Activated CD4-positive, alpha-beta T cell treated with anti-CD3 and anti-CD28 coated beads for 36 hours (primary cell): ENCODE measurements at regions of chr11 and their contacts with region 1.

Region 1: GRCh38 chr11:82978422-82979099 is 77.0 kb downstream of the DDIAS start:
- DNase-seq: no peak
- ATAC-seq: peak; percentile 69
- H3K4me3 Mint-ChIP-seq: no peak overlapping the region
- H3K27ac Mint-ChIP-seq: peak overlapping the region; percentile 32
- H3K4me1 Mint-ChIP-seq: peaks cover 40% of the 10 kb centered on the region
- H3K27me3 Mint-ChIP-seq: no peaks in the 10 kb centered on the region

Region 2: GRCh38 chr11:82900277-82901164 is 78.0 kb before region 1 on chr11 and contains the start of gene PRCP:
- CTCF ChIA-PET with region 1: no interaction called
- POLR2A ChIA-PET with region 1: no interaction called
- intact Hi-C with region 1: loop called (anchors 1 to 5 kb)
- DNase-seq: peak; percentile 97
- ATAC-seq: peak; percentile 85
- H3K4me3 Mint-ChIP-seq: peak within 1 kb of the TSS; percentile 91
- H3K27ac Mint-ChIP-seq: peak within 1 kb of the TSS; percentile 100
- H3K4me1 Mint-ChIP-seq: peaks cover 44% of the 10 kb centered on the region
- H3K27me3 Mint-ChIP-seq: no peaks in the 10 kb centered on the region
- total RNA-seq, gene PRCP: 18.2 to 23.4 TPM

Region 3: GRCh38 chr11:82996966-82997606 is 18.5 kb after region 1 on chr11:
- CTCF ChIA-PET with region 1: interaction called, 10 read pairs
- POLR2A ChIA-PET with region 1: no interaction called
- intact Hi-C with region 1: loop called (anchors 1 kb)
- DNase-seq: peak; percentile 59
- ATAC-seq: peak; percentile 51
- H3K4me3 Mint-ChIP-seq: no peak overlapping the region
- H3K27ac Mint-ChIP-seq: no peak overlapping the region
- H3K4me1 Mint-ChIP-seq: peaks cover 65% of the 10 kb centered on the region
- H3K27me3 Mint-ChIP-seq: no peaks in the 10 kb centered on the region

Region 4: GRCh38 chr11:83063073-83063754 is 84.7 kb after region 1 on chr11:
- CTCF ChIA-PET with region 1: interaction called, 4 read pairs
- POLR2A ChIA-PET with region 1: no interaction called
- intact Hi-C with region 1: loop called in 1 of 2 experiments (anchors 2 kb)
- DNase-seq: no peak
- ATAC-seq: peak; percentile 84
- H3K4me3 Mint-ChIP-seq: peak overlapping the region; percentile 62
- H3K27ac Mint-ChIP-seq: peak overlapping the region; percentile 99
- H3K4me1 Mint-ChIP-seq: peaks cover 64% of the 10 kb centered on the region
- H3K27me3 Mint-ChIP-seq: no peaks in the 10 kb centered on the region